Tibial artery (tissue), 4 donors: ENCODE measurements at regions of chr6 and their contacts with region 1.

Region 1: GRCh38 chr6:32868257-32868788 is 14.3 kb downstream of the PSMB9 start:
- DNase-seq: peak; percentile 71 to 83
- H3K4me3 ChIP-seq: no peak overlapping the region
- H3K27ac ChIP-seq: no peak overlapping the region
- H3K4me1 ChIP-seq: no peaks in the 10 kb centered on the region
- H3K27me3 ChIP-seq: peaks cover 0 to 11% of the 10 kb centered on the region in 2 donors
- CTCF ChIP-seq: peak; percentile 85 to 93

Region 2: DNA sequence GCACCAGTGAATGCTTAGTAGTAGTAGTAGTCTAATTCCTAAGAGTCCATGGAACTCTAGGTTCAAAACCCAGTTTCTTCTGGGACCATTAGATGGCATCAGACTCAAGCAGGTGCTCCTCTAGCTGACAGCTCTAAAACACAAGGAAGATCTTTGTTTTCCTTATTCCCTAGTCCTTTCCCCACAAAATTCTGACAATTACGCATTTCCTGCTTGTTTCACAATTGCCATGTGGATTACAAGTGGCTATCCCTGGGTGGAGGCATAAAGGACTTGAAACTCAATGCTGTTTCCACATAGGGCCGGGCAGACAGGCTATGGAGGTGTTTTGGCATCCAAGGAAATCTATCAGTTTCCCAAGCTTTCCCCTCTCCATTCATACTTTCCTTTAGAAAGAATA is 42.4 kb before region 1 on chr6:
- intact Hi-C with region 1: loop called (anchors 5 kb)
- DNase-seq: no peak
- H3K4me3 ChIP-seq: no peak overlapping the region
- H3K27ac ChIP-seq: no peak overlapping the region
- H3K4me1 ChIP-seq: no peaks in the 10 kb centered on the region
- H3K27me3 ChIP-seq: no peaks in the 10 kb centered on the region
- CTCF ChIP-seq: peak; percentile 35 to 43